RWPE1 (cell line): ENCODE measurements at regions of chr9 and their contacts with region 1.

Region 1: GRCh38 chr9:113876151-113876992 is at the start of gene ZNF618:
- DNase-seq: peak; percentile 66
- H3K27ac ChIP-seq: peak within 1 kb of the TSS; percentile 77
- CTCF ChIP-seq: peak; percentile 74

Region 2: DNA sequence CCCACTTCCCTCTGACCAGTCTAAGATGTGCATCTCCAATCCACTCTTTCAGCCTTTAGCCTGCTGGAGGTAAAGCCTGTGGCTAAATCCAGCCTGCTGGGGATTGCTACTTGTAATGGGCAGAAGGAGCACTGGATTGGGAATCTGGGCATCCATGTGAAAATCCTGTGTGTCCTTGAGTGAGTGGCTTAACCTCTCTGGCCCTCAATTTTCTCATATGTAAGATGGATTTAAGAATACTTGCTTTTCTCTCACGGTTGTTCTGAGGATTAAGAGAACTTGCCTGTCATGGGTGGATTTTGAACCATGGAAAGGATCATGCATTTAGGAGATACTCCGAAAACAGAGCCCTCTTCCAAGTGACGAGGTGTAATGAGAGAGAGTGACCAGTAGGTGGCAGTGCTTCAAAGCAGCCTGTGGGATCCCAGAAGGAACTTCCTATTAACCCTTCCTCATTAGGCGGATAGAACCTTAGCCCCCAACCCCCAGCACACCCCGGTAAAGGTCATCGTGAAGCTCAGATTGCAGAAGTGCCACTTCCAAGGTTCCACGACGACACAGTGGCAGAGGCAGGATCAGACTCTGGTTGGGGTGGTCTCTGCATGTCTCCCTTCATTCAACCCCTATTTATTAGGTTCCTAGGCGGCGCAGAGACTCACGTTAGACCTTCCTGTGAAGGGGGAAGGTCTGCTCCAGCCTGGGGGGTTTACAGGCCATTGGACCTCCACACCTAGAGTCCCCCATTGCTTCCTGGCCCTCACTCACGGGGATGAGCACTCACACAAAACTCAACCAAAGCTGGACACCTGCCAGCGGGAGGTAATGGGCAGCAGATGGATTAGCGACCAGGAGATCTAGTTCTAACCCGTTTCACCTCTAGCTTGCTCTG is 69.0 kb before region 1 on chr9:
- CTCF ChIA-PET with region 1: interaction called, 13 read pairs
- POLR2A ChIA-PET with region 1: no interaction called
- DNase-seq: peak; percentile 93
- H3K27ac ChIP-seq: no peak overlapping the region
- CTCF ChIP-seq: peak; percentile 97

Region 3: DNA sequence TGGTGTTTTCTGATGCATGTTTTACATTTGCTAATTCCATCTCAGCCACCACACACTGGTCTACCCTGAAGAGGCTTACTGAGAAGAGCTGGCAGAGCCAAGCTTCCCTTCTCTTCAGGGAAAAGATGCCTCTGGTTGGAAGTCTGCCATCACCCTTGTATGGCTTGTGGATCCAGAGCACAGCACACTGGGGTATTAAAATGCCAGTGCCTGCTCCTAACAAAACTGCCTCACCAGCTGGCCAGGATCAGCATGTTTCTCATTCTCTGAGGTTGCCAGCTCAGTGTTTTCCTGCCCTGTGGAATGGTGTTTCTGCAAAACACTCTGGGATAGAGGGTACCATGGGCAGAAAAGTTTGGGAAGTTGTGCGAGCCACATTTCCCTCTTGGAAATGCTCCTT is 31.9 kb before region 1 on chr9:
- CTCF ChIA-PET with region 1: interaction called, 10 read pairs
- POLR2A ChIA-PET with region 1: no interaction called
- DNase-seq: no peak
- H3K27ac ChIP-seq: no peak overlapping the region
- CTCF ChIP-seq: no peak

Region 4: GRCh38 chr9:113909421-113909820 is 33.0 kb after region 1 on chr9:
- CTCF ChIA-PET with region 1: no interaction called
- POLR2A ChIA-PET with region 1: no interaction called
- DNase-seq: no peak
- H3K27ac ChIP-seq: no peak overlapping the region
- CTCF ChIP-seq: no peak

Region 5: DNA sequence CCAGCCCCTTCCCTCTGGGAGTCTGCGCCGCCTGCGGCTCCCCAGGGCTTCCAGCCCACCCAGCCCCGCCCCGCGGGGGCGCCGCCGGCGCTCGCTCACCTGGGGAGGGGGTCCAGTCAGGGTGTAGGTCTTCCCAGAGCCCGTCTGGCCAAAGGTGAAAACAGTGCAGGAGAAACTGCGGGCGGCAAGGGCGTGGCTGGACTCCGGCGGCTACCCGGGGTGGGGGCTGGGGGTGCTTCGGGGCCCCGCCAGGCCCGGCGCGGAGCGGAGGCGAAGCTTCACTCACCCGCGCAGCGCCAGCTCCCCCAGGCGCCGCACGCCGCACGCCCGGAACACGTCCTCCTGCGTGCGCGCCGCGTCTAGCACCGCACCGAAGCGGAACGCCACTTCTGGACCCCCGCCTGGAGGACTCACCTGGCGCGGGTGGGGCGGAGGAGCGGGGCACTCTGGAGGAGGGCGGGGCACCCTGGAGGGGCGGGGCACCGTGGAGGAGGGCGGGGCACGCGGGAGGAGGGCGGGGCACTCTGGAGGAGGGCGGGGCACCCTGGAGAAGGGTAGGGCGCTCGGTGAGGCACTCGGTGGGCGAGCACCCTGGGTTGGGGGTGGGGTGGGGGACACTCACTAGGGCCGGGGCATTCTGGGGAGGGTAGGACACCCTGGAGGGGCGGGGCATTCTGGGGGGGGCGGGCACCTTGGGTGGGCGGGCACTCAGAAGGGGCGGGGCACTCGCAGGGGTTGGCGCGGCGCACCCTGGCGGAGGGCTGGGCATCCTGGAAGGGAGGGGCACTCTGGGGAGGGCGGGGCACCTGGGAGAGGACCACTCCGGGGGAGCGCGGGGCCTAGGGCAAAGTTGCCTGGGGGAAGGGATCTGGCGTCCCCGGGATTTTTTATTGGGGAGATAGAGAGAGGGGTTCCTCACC is 221.9 kb after region 1 on chr9:
- CTCF ChIA-PET with region 1: no interaction called
- POLR2A ChIA-PET with region 1: no interaction called
- DNase-seq: peak; percentile 79
- H3K27ac ChIP-seq: no peak overlapping the region
- CTCF ChIP-seq: no peak